A673 (cell line): ENCODE measurements at regions of chr4 and their contacts with region 1.

Region 1: DNA sequence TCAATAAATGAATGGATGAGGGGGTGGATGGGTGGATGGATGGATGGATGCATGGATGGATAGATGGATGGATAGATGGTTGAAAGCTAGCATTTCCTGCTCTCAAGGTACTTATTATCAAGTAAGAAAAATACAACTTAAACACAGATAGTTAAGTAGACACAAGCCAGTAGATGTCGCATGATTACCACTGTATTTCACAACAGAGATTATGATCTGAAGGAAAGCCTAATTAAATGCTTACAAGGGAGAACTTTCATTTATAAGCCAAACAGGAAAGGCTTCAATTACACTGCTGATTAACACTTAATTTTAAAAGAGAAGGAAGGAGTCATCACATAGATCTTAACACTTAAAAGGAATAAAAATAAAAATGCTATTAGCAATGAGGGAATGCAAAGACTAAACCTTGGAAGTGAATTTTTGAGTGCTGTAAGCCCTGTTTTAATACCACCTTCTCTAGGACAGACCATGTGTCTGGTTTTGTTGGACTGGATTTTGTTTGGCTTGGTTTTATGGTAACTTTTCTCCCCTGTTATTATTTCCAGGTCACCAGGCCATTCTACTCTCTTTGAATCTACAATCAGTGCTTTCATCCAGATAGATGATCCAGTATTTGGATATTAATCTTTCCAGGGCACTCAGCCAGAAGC is 75.4 kb upstream of the SLC39A8 start:
- DNase-seq: peak; percentile 87
- H3K4me3 ChIP-seq: no peak overlapping the region
- H3K27ac ChIP-seq: no peak overlapping the region
- H3K4me1 ChIP-seq: peaks cover 10% of the 10 kb centered on the region
- H3K27me3 ChIP-seq: peaks cover 23% of the 10 kb centered on the region
- CTCF ChIP-seq: peak; percentile 65

Region 2: GRCh38 chr4:102439236-102439614 is 18.5 kb after region 1 on chr4:
- CTCF ChIA-PET with region 1: no interaction called
- POLR2A ChIA-PET with region 1: no interaction called
- intact Hi-C with region 1: no loop called
- DNase-seq: peak; percentile 90
- H3K4me3 ChIP-seq: no peak overlapping the region
- H3K27ac ChIP-seq: peak overlapping the region; percentile 78
- H3K4me1 ChIP-seq: peaks cover 20% of the 10 kb centered on the region
- H3K27me3 ChIP-seq: no peaks in the 10 kb centered on the region
- CTCF ChIP-seq: no peak

Region 3: DNA sequence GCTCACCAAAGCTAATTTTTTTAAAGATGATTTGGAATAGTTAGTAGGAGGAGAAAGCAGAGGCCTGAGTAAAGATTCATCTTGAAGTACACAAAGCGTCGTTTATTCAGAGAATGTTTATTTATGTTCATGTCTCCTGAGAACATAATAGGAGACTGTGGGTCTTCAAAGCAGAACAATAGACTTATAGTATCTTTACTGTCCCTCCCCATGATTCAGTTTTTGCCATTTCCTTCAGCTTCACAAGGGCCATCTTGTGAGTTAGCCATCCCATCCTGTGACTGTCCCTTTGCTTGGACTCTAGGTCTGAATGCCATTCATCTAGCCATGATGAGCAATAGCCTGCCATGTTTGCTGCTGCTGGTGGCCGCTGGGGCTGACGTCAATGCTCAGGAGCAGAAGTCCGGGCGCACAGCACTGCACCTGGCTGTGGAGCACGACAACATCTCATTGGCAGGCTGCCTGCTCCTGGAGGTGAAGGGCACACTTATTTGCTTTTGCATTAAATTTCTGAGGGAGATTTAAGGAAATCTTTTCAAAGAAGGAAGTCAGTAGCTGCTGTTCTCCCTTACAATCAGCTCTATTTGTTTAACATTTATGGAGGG is 186.3 kb after region 1 on chr4:
- CTCF ChIA-PET with region 1: no interaction called
- POLR2A ChIA-PET with region 1: interaction called, 13 read pairs
- intact Hi-C with region 1: no loop called
- DNase-seq: no peak
- H3K4me3 ChIP-seq: no peak overlapping the region
- H3K27ac ChIP-seq: no peak overlapping the region
- H3K4me1 ChIP-seq: no peaks in the 10 kb centered on the region
- H3K27me3 ChIP-seq: no peaks in the 10 kb centered on the region
- CTCF ChIP-seq: no peak

Region 4: DNA sequence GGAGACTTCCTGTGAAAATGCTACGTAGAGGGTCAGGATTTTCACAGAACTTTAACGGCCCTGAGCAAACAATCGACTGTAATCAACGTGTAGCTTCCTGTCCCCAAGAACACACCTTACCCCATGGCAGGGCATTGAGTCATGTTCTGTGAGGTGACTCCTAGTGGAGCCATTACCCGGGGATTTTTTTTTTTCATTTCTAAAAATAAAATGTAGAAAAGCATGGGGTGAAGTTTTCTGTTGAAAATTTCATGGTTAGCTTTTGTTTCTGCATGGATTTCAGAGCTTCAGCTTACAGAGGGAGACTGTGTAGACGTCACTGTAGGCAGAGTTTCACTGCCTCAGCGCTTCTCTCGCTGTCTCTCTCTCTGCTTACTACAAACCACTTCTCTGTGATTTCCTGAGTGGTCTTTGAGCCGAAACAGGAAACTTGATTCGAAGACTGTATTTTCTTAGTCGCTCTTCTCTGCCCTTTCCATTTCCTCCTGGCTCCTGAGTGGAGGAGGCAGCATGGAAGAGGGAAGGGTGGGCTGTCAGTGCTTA is 192.2 kb after region 1 on chr4:
- CTCF ChIA-PET with region 1: no interaction called
- POLR2A ChIA-PET with region 1: interaction called, 23 read pairs
- intact Hi-C with region 1: no loop called
- DNase-seq: no peak
- H3K4me3 ChIP-seq: no peak overlapping the region
- H3K27ac ChIP-seq: no peak overlapping the region
- H3K4me1 ChIP-seq: no peaks in the 10 kb centered on the region
- H3K27me3 ChIP-seq: no peaks in the 10 kb centered on the region
- CTCF ChIP-seq: no peak